ENCODE measurements at regions of chr16 and their contacts with region 1.

Region 1: GRCh38 chr16:2968738-2969544 is at the start of gene PAQR4:
- DNase-seq: peak; percentile 90
- ATAC-seq: peak; percentile 75
- H3K4me3 Mint-ChIP-seq: peak within 1 kb of the TSS; percentile 72
- H3K27ac Mint-ChIP-seq: peak within 1 kb of the TSS; percentile 25
- H3K4me1 Mint-ChIP-seq: peaks cover 31% of the 10 kb centered on the region
- H3K27me3 Mint-ChIP-seq: peaks cover 21% of the 10 kb centered on the region
- total RNA-seq, gene PAQR4: 28.7 to 31.2 TPM

Region 2: GRCh38 chr16:2673066-2673999 is 295.6 kb before region 1 on chr16:
- CTCF ChIA-PET with region 1: no interaction called
- POLR2A ChIA-PET with region 1: no interaction called
- intact Hi-C with region 1: loop called in 1 of 2 experiments (anchors 5 kb)
- DNase-seq: peak; percentile 98
- ATAC-seq: peak; percentile 97
- H3K4me3 Mint-ChIP-seq: peak overlapping the region; percentile 73
- H3K27ac Mint-ChIP-seq: peak overlapping the region; percentile 47
- H3K4me1 Mint-ChIP-seq: peaks cover 28% of the 10 kb centered on the region
- H3K27me3 Mint-ChIP-seq: no peaks in the 10 kb centered on the region

Region 3: DNA sequence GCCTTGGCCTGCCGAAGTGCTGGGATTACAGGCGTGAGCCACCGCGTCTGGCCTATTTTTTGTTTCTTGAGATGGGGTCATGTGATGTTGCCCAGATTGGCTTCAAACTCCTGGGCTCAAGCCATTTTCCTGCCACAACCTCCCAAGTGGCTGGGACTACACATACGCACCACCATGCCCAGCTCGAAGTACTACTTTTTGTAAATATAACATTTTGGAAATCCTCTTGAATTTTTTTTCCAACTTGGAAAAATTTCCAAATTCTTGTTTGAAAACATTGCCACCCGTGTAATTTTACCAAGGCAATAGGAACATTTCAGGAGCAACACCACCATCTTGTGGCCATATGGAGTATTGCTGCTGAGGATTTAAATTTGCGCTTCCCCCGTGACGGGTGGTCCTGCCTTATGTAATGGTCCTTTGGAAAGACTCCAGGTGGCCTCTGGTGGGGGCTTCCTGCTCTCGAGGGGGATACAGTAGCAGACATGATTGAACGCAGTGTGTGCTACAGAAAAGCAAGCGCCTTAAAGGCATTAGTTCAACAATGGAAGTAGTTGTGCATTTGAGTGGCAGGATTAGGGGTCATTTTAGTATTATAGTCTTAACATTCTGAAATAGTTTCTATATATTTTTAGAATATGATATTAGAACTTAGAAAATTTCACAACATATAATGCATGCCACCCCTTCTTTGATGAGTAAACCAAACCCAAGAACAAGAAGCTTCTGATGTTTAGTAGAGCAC is 49.3 kb before region 1 on chr16:
- CTCF ChIA-PET with region 1: no interaction called
- POLR2A ChIA-PET with region 1: no interaction called
- intact Hi-C with region 1: no loop called
- DNase-seq: peak; percentile 72
- ATAC-seq: peak; percentile 60
- H3K4me3 Mint-ChIP-seq: no peak overlapping the region
- H3K27ac Mint-ChIP-seq: no peak overlapping the region
- H3K4me1 Mint-ChIP-seq: peaks cover 18% of the 10 kb centered on the region
- H3K27me3 Mint-ChIP-seq: no peaks in the 10 kb centered on the region

Region 4: GRCh38 chr16:2980227-2981086 is 11.5 kb after region 1 on chr16 and contains the start of gene PKMYT1:
- CTCF ChIA-PET with region 1: interaction called, 4 read pairs
- POLR2A ChIA-PET with region 1: interaction called, 5 read pairs
- intact Hi-C with region 1: loop called (anchors 1 kb)
- DNase-seq: peak; percentile 97
- ATAC-seq: peak; percentile 91
- H3K4me3 Mint-ChIP-seq: peak within 1 kb of the TSS; percentile 87
- H3K27ac Mint-ChIP-seq: peak within 1 kb of the TSS; percentile 84
- H3K4me1 Mint-ChIP-seq: peaks cover 6% of the 10 kb centered on the region
- H3K27me3 Mint-ChIP-seq: peaks cover 2% of the 10 kb centered on the region
- total RNA-seq, gene PKMYT1: 101 to 117 TPM

Region 5: GRCh38 chr16:3003582-3004302 is 34.8 kb after region 1 on chr16:
- CTCF ChIA-PET with region 1: interaction called, 3 read pairs
- POLR2A ChIA-PET with region 1: no interaction called
- intact Hi-C with region 1: loop called in 1 of 2 experiments (anchors 1 kb)
- DNase-seq: peak; percentile 99
- ATAC-seq: peak; percentile 100
- H3K4me3 Mint-ChIP-seq: peak overlapping the region; percentile 32
- H3K27ac Mint-ChIP-seq: no peak overlapping the region
- H3K4me1 Mint-ChIP-seq: peaks cover 23% of the 10 kb centered on the region
- H3K27me3 Mint-ChIP-seq: peaks cover 6% of the 10 kb centered on the region

Region 6: DNA sequence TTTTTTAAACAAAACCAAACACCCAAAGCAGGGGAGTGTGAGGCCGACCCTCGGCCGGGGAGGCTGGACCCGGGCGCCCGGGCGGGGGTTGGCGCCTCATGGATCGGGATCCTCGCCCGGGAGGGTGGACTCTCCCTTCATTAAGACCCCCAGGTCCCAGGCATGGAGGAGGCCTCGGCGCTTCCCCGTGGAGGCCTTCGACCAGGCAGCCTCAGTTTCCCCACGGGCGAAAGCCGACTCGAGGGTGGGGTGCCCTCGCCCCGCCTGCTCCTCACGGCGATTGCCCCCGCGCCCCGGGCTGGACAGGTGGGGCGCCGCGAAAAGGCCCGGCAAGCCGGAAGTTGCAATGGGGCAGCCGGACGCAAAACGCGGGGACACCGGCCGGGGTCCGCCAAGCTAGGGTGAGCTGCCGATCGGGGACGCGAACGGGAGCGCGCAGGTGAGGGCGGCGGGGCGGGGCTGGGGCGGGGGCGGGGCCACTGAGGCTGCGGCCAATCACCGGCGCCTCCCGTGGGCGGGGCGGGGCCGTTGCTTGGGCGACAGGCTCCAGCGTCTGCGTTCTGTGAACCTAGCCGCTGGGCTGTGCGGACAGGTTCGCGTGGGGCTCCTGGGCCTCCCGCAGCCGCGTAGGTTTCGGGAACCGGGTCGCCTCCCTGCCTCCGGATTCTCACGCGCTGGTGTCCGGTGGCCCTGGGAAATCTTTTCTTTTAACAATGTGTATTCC is 137.4 kb after region 1 on chr16:
- CTCF ChIA-PET with region 1: no interaction called
- POLR2A ChIA-PET with region 1: no interaction called
- intact Hi-C with region 1: loop called in 1 of 2 experiments (anchors 1 kb)
- DNase-seq: peak; percentile 96
- ATAC-seq: peak; percentile 88
- H3K4me3 Mint-ChIP-seq: peak overlapping the region; percentile 76
- H3K27ac Mint-ChIP-seq: peak overlapping the region; percentile 94
- H3K4me1 Mint-ChIP-seq: peaks cover 31% of the 10 kb centered on the region
- H3K27me3 Mint-ChIP-seq: no peaks in the 10 kb centered on the region

Measured in activated CD4-positive, alpha-beta T cell treated with anti-CD3 and anti-CD28 coated beads for 36 hours (primary cell).